Calu3 (cell line): ENCODE measurements at regions of chr10 and their contacts with region 1.

Region 1: GRCh38 chr10:57849691-57850357 is 417.9 kb downstream of the IPMK start:
- DNase-seq: peak; percentile 8
- H3K4me3 Mint-ChIP-seq: no peak overlapping the region
- H3K27ac Mint-ChIP-seq: peak overlapping the region; percentile 10
- H3K4me1 Mint-ChIP-seq: peaks cover 42% of the 10 kb centered on the region
- H3K27me3 Mint-ChIP-seq: no peaks in the 10 kb centered on the region
- CTCF ChIP-seq: peak; percentile 62

Region 2: DNA sequence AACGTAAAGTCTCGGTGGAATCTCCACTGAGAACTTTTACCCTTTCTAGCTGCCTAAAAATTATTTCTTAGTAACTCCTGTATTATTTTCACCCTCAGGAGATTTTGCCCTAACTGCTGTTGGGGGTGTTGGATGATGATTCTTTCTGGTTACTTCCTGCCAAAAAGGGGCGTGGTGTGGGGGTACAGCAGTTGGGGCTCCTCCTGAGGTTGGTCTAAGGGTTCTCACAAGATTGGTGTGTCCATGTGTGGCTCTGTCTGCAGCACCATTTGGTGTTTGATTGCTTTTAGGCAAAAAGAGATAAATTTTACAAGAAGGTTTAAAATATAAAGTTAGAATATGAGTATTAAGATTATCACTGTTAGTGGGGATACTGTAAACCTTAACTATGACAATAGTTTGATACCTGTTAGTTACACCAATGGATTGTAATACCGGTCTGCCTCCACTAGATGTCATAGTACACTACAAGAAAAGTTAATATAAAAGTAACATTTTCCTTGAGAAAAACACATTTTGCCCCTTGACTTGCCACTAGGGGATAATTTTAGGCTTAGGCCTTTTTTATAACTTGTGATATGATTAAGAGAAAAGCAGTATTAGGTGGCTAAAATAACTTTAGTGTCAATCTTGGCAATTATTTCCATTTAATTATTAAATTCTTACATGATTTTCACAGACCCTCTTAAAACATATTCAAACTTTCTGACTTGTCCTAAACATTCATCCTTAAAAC is 510.8 kb before region 1 on chr10:
- CTCF ChIA-PET with region 1: no interaction called
- intact Hi-C with region 1: loop called (anchors 10 kb)
- DNase-seq: peak; percentile 45
- H3K4me3 Mint-ChIP-seq: no peak overlapping the region
- H3K27ac Mint-ChIP-seq: no peak overlapping the region
- H3K4me1 Mint-ChIP-seq: no peaks in the 10 kb centered on the region
- H3K27me3 Mint-ChIP-seq: no peaks in the 10 kb centered on the region
- CTCF ChIP-seq: peak; percentile 79

Region 3: GRCh38 chr10:57579926-57580325 is 269.9 kb before region 1 on chr10:
- CTCF ChIA-PET with region 1: no interaction called
- intact Hi-C with region 1: loop called (anchors 1 kb)
- DNase-seq: peak; percentile 51
- H3K4me3 Mint-ChIP-seq: no peak overlapping the region
- H3K27ac Mint-ChIP-seq: peak overlapping the region; percentile 42
- H3K4me1 Mint-ChIP-seq: no peaks in the 10 kb centered on the region
- H3K27me3 Mint-ChIP-seq: no peaks in the 10 kb centered on the region
- CTCF ChIP-seq: peak; percentile 62

Region 4: GRCh38 chr10:57716886-57717285 is 132.9 kb before region 1 on chr10:
- CTCF ChIA-PET with region 1: interaction called, 3 read pairs
- intact Hi-C with region 1: loop called (anchors 1 kb)
- DNase-seq: peak; percentile 12
- H3K4me3 Mint-ChIP-seq: no peak overlapping the region
- H3K27ac Mint-ChIP-seq: no peak overlapping the region
- H3K4me1 Mint-ChIP-seq: peaks cover 25% of the 10 kb centered on the region
- H3K27me3 Mint-ChIP-seq: no peaks in the 10 kb centered on the region
- CTCF ChIP-seq: peak; percentile 50